ENCODE measurements at regions of chr3 and their contacts with region 1.

Region 1: DNA sequence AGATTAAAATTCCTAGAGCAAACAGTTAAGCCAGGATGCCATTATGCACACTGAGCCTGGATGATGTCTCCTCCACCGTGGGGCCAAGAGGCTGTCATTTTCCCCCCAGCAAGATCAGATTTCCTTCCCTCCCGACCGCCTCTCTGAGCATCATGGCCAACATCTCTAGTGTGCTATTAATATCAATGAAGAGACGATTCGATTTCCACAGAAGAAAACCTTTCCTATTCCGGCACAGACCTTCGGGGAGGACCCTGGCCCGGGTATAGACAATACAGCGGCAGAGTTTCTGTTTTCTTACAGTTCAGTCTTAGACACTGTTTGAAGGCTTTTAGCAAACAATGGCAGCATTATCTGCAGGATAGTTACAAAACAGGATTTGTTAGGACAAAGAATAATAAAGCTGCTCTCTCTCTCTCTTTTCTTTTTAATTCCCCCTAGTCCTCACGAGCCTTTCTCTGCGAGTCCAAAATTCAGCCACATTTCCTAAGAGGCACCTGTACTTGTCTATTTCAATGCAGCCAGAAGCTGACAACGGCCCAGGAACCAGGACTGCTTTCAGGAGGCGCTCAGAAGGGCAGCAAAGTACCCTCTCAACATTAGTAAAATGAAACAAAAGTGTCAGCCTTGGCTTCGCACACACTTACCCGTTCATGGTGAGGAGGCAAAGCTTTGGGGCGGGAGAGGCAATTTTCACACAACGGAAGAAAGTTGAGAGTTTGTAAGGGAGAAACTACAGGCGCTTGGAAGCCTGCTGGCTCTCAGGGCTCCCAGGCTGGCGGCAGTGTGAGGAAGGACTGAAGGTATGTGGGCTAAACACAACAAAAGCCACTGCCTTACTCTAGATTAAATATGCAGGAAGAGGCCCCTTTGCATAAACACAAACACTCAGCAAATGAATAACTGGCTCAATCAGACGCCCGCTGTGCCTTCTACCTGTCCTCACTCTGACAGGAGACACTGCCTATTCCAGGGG is 278.0 kb downstream of the FOXP1 start:
- DNase-seq: no peak
- H3K4me3 ChIP-seq: peak overlapping the region; percentile 19 to 48 (median 42)
- H3K27ac ChIP-seq: peak overlapping the region; percentile 83 to 88 (median 84)
- H3K4me1 ChIP-seq: peaks cover 0 to 82% (median 48%) of the 10 kb centered on the region in 4 donors
- H3K27me3 ChIP-seq: no peaks in the 10 kb centered on the region
- CTCF ChIP-seq: no peak
- EP300 ChIP-seq: no peak
- POLR2A ChIP-seq: no peak

Region 2: DNA sequence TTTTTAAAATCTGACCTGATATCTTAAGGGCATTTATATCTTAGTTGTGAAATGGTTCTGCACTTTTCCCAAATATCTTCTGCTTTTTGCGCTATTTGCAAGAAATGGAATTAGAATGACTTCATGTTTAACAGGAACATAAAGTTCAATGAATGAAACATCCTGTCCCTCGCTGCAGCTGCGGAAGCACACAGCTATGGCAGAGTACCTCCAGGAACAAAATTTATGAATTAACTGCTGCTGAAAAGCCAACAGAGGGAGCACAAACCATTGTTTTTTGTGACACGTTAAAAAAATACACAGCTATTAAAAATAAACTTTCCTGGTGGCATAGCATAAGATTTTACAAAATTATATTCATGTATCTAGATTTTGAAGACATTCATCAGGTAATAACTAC is 588.7 kb before region 1 on chr3:
- intact Hi-C with region 1: loop called (anchors 5 kb)
- DNase-seq: peak; percentile 72
- H3K4me3 ChIP-seq: no peak overlapping the region
- H3K27ac ChIP-seq: no peak overlapping the region
- H3K4me1 ChIP-seq: peaks cover 0 to 7% (median 2%) of the 10 kb centered on the region in 4 donors
- H3K27me3 ChIP-seq: no peaks in the 10 kb centered on the region
- CTCF ChIP-seq: peak in 3 of 4 experiments; percentile 22 to 40 (median 23)
- EP300 ChIP-seq: peak in 1 of 4 donors; percentile 58
- POLR2A ChIP-seq: no peak

Region 3: DNA sequence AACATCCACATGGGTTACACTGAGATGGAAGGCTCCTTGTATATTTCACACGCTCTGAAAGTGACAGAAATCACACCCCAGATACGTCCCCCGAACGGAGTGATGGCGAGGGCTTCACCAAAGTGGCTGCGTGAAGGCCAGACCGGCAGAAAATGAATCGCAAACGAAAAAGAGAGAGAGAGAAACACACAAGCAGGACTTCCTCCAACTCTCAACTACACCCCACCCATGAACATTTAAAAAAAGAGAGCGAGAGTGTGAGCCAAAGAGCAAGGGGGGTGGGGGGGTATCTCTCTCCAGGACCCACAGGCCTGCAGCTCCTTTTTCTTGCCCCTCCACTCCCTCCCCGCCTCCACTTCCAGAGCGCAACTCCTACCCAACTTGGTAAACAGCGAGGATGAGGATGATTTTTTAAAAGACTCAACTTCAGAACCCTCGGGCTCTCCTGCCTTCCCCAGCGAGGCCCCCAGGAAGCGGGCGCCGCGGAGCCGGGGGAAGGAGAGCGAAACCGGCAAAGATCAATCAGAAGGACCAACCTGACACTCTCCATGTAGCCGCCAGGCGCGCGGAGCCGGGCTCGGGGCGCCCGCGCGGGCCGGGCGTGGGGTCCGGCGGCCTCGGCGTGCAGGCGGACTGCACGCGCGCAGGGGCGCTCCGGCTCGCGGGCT is 241.1 kb before region 1 on chr3:
- intact Hi-C with region 1: loop called (anchors 5 kb)
- DNase-seq: peak; percentile 74
- H3K4me3 ChIP-seq: peak overlapping the region; percentile 71 to 81 (median 72)
- H3K27ac ChIP-seq: peak overlapping the region; percentile 92 to 99 (median 98)
- H3K4me1 ChIP-seq: peaks cover 0 to 67% (median 60%) of the 10 kb centered on the region in 4 donors
- H3K27me3 ChIP-seq: no peaks in the 10 kb centered on the region
- CTCF ChIP-seq: no peak
- EP300 ChIP-seq: no peak
- POLR2A ChIP-seq: no peak

Region 4: GRCh38 chr3:71247221-71247976 is 58.1 kb before region 1 on chr3:
- intact Hi-C with region 1: loop called (anchors 5 kb)
- DNase-seq: no peak
- H3K4me3 ChIP-seq: no peak overlapping the region
- H3K27ac ChIP-seq: peak overlapping the region; percentile 79 to 89 (median 85)
- H3K4me1 ChIP-seq: peaks cover 0 to 41% (median 20%) of the 10 kb centered on the region in 4 donors
- H3K27me3 ChIP-seq: no peaks in the 10 kb centered on the region
- CTCF ChIP-seq: no peak
- EP300 ChIP-seq: no peak
- POLR2A ChIP-seq: no peak

Region 5: DNA sequence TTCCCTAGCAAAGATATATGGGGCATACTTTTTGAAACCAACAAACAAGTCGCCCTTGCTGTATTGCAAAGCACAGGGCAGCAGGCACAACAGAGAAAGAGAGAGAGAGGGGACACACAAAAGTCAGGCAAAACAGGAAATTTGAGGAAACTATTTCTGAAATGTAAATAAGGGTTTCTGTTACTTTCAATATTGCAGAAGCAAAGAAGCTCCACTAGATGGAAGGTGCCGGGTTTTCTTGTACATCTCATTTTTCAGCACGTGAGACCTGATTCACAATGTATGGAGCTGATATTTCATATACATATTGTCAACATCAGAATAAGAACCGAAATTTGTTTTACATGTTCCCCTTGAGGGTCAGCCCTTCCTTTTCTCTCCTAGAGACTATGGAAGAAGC is 150.6 kb after region 1 on chr3:
- intact Hi-C with region 1: no loop called
- DNase-seq: no peak
- H3K4me3 ChIP-seq: no peak overlapping the region
- H3K27ac ChIP-seq: no peak overlapping the region
- H3K4me1 ChIP-seq: peaks cover 0 to 31% (median 10%) of the 10 kb centered on the region in 4 donors
- H3K27me3 ChIP-seq: no peaks in the 10 kb centered on the region
- CTCF ChIP-seq: no peak
- EP300 ChIP-seq: no peak
- POLR2A ChIP-seq: no peak

Region 6: GRCh38 chr3:71681224-71681668 is 375.7 kb after region 1 on chr3:
- intact Hi-C with region 1: loop called (anchors 5 kb)
- DNase-seq: peak; percentile 89
- H3K4me3 ChIP-seq: no peak overlapping the region
- H3K27ac ChIP-seq: peak overlapping the region; percentile 56 to 70 (median 67)
- H3K4me1 ChIP-seq: peaks cover 0 to 70% (median 41%) of the 10 kb centered on the region in 4 donors
- H3K27me3 ChIP-seq: no peaks in the 10 kb centered on the region
- CTCF ChIP-seq: peak; percentile 31 to 64 (median 58)
- EP300 ChIP-seq: no peak
- POLR2A ChIP-seq: no peak